PC-9 (cell line): ENCODE measurements at regions of chr11 and their contacts with region 1.

Region 1: GRCh38 chr11:42055606-42056005 is 596.2 kb upstream of the LRRC4C start:
- DNase-seq: no peak
- H3K4me3 ChIP-seq: no peak overlapping the region
- H3K27ac ChIP-seq: no peak overlapping the region
- H3K4me1 ChIP-seq: no peaks in the 10 kb centered on the region
- H3K27me3 ChIP-seq: no peaks in the 10 kb centered on the region
- CTCF ChIP-seq: no peak

Region 2: GRCh38 chr11:42013656-42014201 is 41.9 kb before region 1 on chr11:
- CTCF ChIA-PET with region 1: interaction called, 14 read pairs
- POLR2A ChIA-PET with region 1: no interaction called
- intact Hi-C with region 1: no loop called
- DNase-seq: no peak
- H3K4me3 ChIP-seq: no peak overlapping the region
- H3K27ac ChIP-seq: no peak overlapping the region
- H3K4me1 ChIP-seq: no peaks in the 10 kb centered on the region
- H3K27me3 ChIP-seq: no peaks in the 10 kb centered on the region
- CTCF ChIP-seq: no peak